PC-9 (cell line): ENCODE measurements at regions of chr1 and their contacts with region 1.

Region 1: GRCh38 chr1:67347688-67348472 is 40.2 kb downstream of the IL12RB2 start:
- DNase-seq: peak; percentile 55
- H3K4me3 ChIP-seq: no peak overlapping the region
- H3K27ac ChIP-seq: no peak overlapping the region
- H3K4me1 ChIP-seq: no peaks in the 10 kb centered on the region
- H3K27me3 ChIP-seq: no peaks in the 10 kb centered on the region
- CTCF ChIP-seq: peak; percentile 78

Region 2: GRCh38 chr1:67230539-67230938 is 117.3 kb before region 1 on chr1:
- CTCF ChIA-PET with region 1: interaction called, 3 read pairs
- POLR2A ChIA-PET with region 1: no interaction called
- intact Hi-C with region 1: loop called (anchors 5 kb)
- DNase-seq: peak; percentile 6 to 84
- H3K4me3 ChIP-seq: no peak overlapping the region
- H3K27ac ChIP-seq: peak overlapping the region; percentile 45
- H3K4me1 ChIP-seq: peaks cover 27% of the 10 kb centered on the region
- H3K27me3 ChIP-seq: no peaks in the 10 kb centered on the region
- CTCF ChIP-seq: no peak

Region 3: GRCh38 chr1:67414574-67414973 is 66.7 kb after region 1 on chr1:
- CTCF ChIA-PET with region 1: no interaction called
- POLR2A ChIA-PET with region 1: no interaction called
- intact Hi-C with region 1: loop called (anchors 5 kb)
- DNase-seq: no peak
- H3K4me3 ChIP-seq: no peak overlapping the region
- H3K27ac ChIP-seq: no peak overlapping the region
- H3K4me1 ChIP-seq: no peaks in the 10 kb centered on the region
- H3K27me3 ChIP-seq: no peaks in the 10 kb centered on the region
- CTCF ChIP-seq: no peak

Region 4: DNA sequence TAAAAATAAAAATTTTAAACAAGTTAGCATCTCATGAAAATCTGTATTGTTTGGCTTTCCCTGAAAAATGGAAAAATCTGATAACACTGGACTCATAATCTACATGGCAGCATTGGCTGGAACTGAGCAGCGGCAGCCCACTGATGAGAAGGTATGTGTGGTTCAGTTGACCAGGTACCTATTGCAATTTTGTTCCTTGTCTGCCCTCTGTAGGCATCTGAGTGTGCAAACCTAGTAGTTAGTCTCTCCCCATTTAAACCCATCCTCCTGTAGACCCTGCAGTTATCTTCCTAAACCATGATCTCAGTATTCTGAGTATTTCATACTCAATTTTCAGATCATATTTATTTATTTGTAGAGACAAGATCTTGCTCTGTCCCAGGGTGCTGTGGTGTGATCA is 141.8 kb after region 1 on chr1:
- CTCF ChIA-PET with region 1: no interaction called
- POLR2A ChIA-PET with region 1: no interaction called
- intact Hi-C with region 1: loop called (anchors 1 kb)
- DNase-seq: peak in 1 of 2 experiments; percentile 6
- H3K4me3 ChIP-seq: no peak overlapping the region
- H3K27ac ChIP-seq: no peak overlapping the region
- H3K4me1 ChIP-seq: no peaks in the 10 kb centered on the region
- H3K27me3 ChIP-seq: no peaks in the 10 kb centered on the region
- CTCF ChIP-seq: peak; percentile 43; the same call in 1 of the 2 replicates